ENCODE measurements at regions of chr2 and their contacts with region 1.

Region 1: DNA sequence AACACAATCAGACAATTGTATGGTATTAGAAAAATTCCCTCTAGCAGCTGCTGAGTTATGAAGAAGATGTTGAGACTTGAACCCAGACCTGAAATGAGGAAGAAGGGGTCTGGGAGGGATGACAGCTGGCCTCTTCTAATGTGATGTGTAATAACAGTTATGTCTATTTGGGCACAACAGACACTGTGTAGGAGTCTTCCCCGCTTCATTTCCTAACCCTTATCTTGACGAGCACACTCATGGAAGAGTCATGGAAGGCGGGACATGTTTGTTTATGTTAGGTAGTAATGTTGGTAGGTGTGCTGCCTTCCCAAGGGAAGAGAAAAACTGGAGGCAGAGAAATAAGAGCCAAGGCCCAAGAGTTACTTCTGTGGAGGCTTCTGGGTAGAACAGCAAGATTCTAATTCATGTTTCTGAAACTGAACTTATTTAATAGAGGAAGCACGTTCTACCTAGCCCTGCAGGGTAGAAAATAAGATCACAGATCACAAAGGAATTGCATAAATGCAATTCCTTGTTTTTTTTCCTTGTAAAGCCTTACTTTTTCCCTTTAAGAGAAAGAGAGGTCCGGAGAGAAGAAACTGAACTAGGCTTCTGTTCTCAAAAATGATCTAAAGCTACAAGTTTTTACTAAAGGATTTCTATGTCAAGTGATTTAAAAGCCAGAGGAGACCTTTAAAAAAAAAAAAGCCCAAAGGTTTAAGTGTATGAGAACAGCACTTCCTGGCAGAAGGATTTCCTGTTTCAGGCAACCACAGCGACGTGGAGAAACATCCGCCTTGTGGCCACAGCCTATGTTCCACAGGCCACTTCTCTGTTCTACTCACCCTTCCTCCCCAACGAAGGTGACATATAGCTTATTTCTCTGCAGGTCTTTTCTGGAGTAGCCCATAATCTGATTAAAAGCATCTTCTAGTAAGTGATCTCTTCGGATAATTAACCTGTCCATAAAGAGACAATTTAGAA is 68.5 kb upstream of the STK17B start:
- DNase-seq: peak; percentile 67
- ATAC-seq: peak; percentile 61
- H3K4me3 Mint-ChIP-seq: peak overlapping the region; percentile 41
- H3K27ac Mint-ChIP-seq: peak overlapping the region; percentile 100
- H3K4me1 Mint-ChIP-seq: peaks cover 89% of the 10 kb centered on the region
- H3K27me3 Mint-ChIP-seq: no peaks in the 10 kb centered on the region
- CTCF ChIP-seq: no peak

Region 2: GRCh38 chr2:195709901-195710806 is 529.8 kb before region 1 on chr2:
- CTCF ChIA-PET with region 1: no interaction called
- POLR2A ChIA-PET with region 1: no interaction called
- intact Hi-C with region 1: no loop called
- DNase-seq: no peak
- ATAC-seq: no peak
- H3K4me3 Mint-ChIP-seq: no peak overlapping the region
- H3K27ac Mint-ChIP-seq: no peak overlapping the region
- H3K4me1 Mint-ChIP-seq: peaks cover 7% of the 10 kb centered on the region
- H3K27me3 Mint-ChIP-seq: no peaks in the 10 kb centered on the region
- CTCF ChIP-seq: no peak

Region 3: DNA sequence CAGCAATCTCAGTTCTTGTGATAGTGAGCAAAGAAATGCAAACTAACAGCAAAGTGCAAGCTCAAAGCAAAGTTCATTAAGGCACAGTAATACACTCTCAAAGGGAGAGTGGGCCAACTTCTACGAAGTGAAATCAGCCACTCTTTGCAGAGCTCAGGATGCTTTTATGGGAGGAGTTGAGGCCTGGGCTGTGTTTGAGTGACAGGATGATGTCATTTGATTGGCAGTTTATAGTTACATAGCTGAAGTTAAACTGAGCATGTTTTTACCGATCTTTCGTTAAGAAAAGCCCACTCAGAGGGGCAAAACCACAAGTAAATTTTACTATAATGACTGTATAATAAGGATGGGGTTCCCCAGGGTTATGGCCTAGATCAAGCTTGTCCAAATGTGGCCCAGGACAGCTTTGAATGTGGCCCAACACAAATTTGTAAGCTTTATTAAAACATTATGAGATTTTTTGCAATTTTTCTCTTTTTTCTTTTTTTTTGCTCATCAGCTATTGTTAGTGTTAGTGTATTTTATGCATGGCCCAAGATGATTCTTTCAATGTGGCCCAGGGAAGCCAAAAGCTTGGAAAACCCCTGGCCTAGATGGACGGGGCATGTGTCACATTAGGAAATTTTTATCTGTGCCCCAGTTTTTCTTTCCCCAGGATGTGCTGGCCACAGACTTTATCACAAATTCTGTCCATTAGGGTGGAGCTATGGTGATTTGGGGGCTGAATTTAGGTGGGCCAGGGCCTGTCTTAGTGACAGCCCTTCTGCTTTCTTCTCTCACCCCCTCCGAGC is 162.9 kb before region 1 on chr2:
- CTCF ChIA-PET with region 1: interaction called, 5 read pairs
- POLR2A ChIA-PET with region 1: interaction called, 3 read pairs
- intact Hi-C with region 1: loop called (anchors 1 kb)
- DNase-seq: no peak
- ATAC-seq: no peak
- H3K4me3 Mint-ChIP-seq: no peak overlapping the region
- H3K27ac Mint-ChIP-seq: peak overlapping the region; percentile 1
- H3K4me1 Mint-ChIP-seq: peaks cover 38% of the 10 kb centered on the region
- H3K27me3 Mint-ChIP-seq: no peaks in the 10 kb centered on the region
- CTCF ChIP-seq: no peak

Region 4: GRCh38 chr2:196160101-196160500 is 79.8 kb before region 1 on chr2:
- CTCF ChIA-PET with region 1: interaction called, 3 read pairs
- POLR2A ChIA-PET with region 1: interaction called, 38 read pairs
- intact Hi-C with region 1: loop called (anchors 1 kb)
- DNase-seq: no peak
- ATAC-seq: peak; percentile 75
- H3K4me3 Mint-ChIP-seq: peak overlapping the region; percentile 57
- H3K27ac Mint-ChIP-seq: peak overlapping the region; percentile 84
- H3K4me1 Mint-ChIP-seq: peaks cover 86% of the 10 kb centered on the region
- H3K27me3 Mint-ChIP-seq: no peaks in the 10 kb centered on the region
- CTCF ChIP-seq: no peak

Region 5: DNA sequence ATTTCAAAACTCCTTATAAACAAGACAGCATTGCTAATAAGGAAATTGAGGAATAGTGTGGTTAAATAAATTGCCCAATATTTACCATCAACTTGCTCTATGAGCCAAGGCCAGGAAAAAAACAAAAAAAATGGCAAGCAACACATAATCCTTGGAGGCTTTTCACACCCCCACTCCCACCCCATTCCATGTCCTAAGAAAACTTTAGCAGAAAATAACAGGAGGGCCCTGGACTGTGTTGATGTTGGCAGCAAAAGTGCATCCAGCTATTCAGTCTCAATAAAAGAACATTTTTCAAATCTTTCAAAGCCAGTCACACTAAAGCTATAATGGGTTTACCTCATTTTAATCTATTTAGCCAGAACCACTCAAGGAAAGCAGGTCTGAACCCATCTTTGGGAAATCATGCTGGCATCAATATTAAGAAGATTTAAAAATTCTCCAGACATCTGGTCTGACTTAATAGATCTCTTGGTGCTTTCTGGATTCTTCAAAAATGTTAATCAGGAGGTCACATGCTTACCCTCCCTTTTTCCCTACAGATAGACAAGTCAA is 33.9 kb before region 1 on chr2:
- CTCF ChIA-PET with region 1: interaction called, 3 read pairs
- POLR2A ChIA-PET with region 1: interaction called, 30 read pairs
- intact Hi-C with region 1: loop called (anchors 1 kb)
- DNase-seq: no peak
- ATAC-seq: no peak
- H3K4me3 Mint-ChIP-seq: no peak overlapping the region
- H3K27ac Mint-ChIP-seq: peak overlapping the region; percentile 51
- H3K4me1 Mint-ChIP-seq: peaks cover 47% of the 10 kb centered on the region
- H3K27me3 Mint-ChIP-seq: no peaks in the 10 kb centered on the region
- CTCF ChIP-seq: no peak

Region 6: GRCh38 chr2:196277002-196277401 is 37.1 kb after region 1 on chr2:
- CTCF ChIA-PET with region 1: interaction called, 23 read pairs
- POLR2A ChIA-PET with region 1: interaction called, 34 read pairs
- intact Hi-C with region 1: loop called (anchors 1 kb)
- DNase-seq: no peak
- ATAC-seq: peak; percentile 48
- H3K4me3 Mint-ChIP-seq: no peak overlapping the region
- H3K27ac Mint-ChIP-seq: peak overlapping the region; percentile 95
- H3K4me1 Mint-ChIP-seq: peaks cover 41% of the 10 kb centered on the region
- H3K27me3 Mint-ChIP-seq: no peaks in the 10 kb centered on the region
- CTCF ChIP-seq: peak; percentile 34

Region 7: GRCh38 chr2:197209742-197210408 is 970.0 kb after region 1 on chr2:
- CTCF ChIA-PET with region 1: no interaction called
- POLR2A ChIA-PET with region 1: interaction called, 3 read pairs
- intact Hi-C with region 1: loop called (anchors 10 kb)
- DNase-seq: no peak
- ATAC-seq: peak; percentile 13
- H3K4me3 Mint-ChIP-seq: peak overlapping the region; percentile 66
- H3K27ac Mint-ChIP-seq: peak overlapping the region; percentile 98
- H3K4me1 Mint-ChIP-seq: peaks cover 99% of the 10 kb centered on the region
- H3K27me3 Mint-ChIP-seq: no peaks in the 10 kb centered on the region
- CTCF ChIP-seq: no peak

Measured in activated B cell treated with CpG ODN at 0.5 μM for 24 hours (primary cell).